ENCODE measurements at regions of chr5 and their contacts with region 1.

Region 1: DNA sequence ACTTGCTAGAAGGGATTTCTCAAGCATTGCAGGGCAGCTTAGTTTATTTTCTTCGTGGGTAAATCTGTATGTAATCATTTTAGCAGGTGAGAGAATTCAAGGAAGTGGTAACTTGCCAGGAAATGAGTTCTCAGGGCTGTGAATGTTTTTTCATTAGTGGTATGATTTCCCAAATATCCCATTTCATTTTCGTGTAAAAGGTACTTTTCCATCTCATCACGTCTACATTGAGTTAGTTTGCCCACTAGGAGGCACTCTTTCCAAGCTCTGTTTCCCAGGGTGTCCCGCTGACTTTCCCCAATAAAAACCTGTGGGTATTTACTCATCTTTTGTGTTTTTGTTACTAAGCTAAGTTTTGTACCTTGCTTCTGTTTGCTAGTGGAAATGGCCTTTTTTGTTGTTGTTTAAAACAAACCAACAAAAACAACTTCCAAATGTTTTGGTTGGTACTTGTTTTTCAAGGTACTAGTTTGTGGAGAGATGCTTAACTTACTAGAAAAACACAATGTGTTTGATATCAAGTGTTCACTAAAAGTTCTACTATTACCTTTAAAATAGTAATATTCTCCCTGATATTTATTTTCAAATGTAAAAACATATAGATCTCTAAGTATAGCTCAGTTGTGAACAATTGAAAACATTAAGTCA is 373.6 kb downstream of the ADGRV1 start:
- DNase-seq: peak in 2 of 5 donors; percentile 41 to 58
- ATAC-seq: peak in 3 of 4 donors; percentile 61 to 72 (median 69)
- H3K4me3 ChIP-seq: no peak overlapping the region
- H3K27ac ChIP-seq: peak overlapping the region in 1 of 12 donors; percentile 17
- H3K4me1 ChIP-seq: peaks cover 0 to 6% (median 0%) of the 10 kb centered on the region in 12 donors
- H3K27me3 ChIP-seq: no peaks in the 10 kb centered on the region
- CTCF ChIP-seq: peak; percentile 60 to 88 (median 80)
- POLR2A ChIP-seq: no peak

Region 2: DNA sequence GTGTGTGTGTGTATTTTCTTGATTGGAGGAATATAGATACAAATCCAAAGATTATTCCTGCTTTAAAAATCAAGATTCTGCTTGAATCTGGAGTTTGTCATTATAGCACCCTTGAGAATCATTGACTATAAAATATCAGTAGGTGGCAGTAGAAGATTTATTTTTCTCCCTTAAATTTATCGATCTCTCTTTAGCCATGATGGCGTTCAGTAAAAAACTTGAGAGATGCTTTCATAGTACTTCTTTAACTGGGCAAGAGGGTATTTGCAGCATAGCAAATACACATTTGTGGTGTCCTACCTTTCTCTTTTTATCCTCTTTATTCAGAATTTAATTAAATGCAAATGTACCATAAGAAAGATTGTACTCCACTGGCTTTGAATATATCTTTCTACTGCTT is 65.8 kb before region 1 on chr5:
- intact Hi-C with region 1: loop called in 2 of 10 experiments (anchors 5 kb)
- DNase-seq: no peak
- ATAC-seq: peak in 2 of 4 donors; percentile 61 to 62
- H3K4me3 ChIP-seq: no peak overlapping the region
- H3K27ac ChIP-seq: no peak overlapping the region
- H3K4me1 ChIP-seq: peaks cover 0 to 17% (median 1%) of the 10 kb centered on the region in 12 donors
- H3K27me3 ChIP-seq: no peaks in the 10 kb centered on the region
- CTCF ChIP-seq: peak; percentile 20 to 68 (median 55)
- POLR2A ChIP-seq: no peak

Region 3: GRCh38 chr5:91219803-91220371 is 287.7 kb after region 1 on chr5:
- intact Hi-C with region 1: loop called in 1 of 10 experiments (anchors 10 kb)
- DNase-seq: peak in 1 of 5 donors; percentile 26
- ATAC-seq: peak in 2 of 4 donors; percentile 41 to 52
- H3K4me3 ChIP-seq: no peak overlapping the region
- H3K27ac ChIP-seq: peak overlapping the region in 4 of 12 donors; percentile 6 to 92 (median 35)
- H3K4me1 ChIP-seq: peaks cover 0 to 16% (median 0%) of the 10 kb centered on the region in 12 donors
- H3K27me3 ChIP-seq: no peaks in the 10 kb centered on the region
- CTCF ChIP-seq: peak in 10 of 12 donors; percentile 18 to 54 (median 33)
- POLR2A ChIP-seq: no peak

Region 4: GRCh38 chr5:91419571-91420537 is 487.7 kb after region 1 on chr5:
- intact Hi-C with region 1: loop called in 9 of 10 experiments (anchors 1 to 10 kb)
- DNase-seq: peak in 4 of 5 donors; percentile 36 to 57 (median 46)
- ATAC-seq: no peak
- H3K4me3 ChIP-seq: no peak overlapping the region
- H3K27ac ChIP-seq: no peak overlapping the region
- H3K4me1 ChIP-seq: no peaks in the 10 kb centered on the region
- H3K27me3 ChIP-seq: no peaks in the 10 kb centered on the region
- CTCF ChIP-seq: peak; percentile 69 to 95 (median 83)
- POLR2A ChIP-seq: no peak

Measured in heart left ventricle (tissue), 16 donors.